ENCODE measurements at regions of chr17 and their contacts with region 1.

Region 1: GRCh38 chr17:794876-795275 is 12.7 kb downstream of the MRM3 start:
- DNase-seq: peak; percentile 84 to 92 (median 89)
- H3K4me3 ChIP-seq: peak overlapping the region in 51 of 59 donors; percentile 1 to 54 (median 28)
- H3K27ac ChIP-seq: peak overlapping the region in 55 of 59 donors; percentile 0 to 91 (median 72)
- H3K27me3 ChIP-seq: no peaks in the 10 kb centered on the region
- CTCF ChIP-seq: peak; percentile 76 to 97 (median 92)

Region 2: DNA sequence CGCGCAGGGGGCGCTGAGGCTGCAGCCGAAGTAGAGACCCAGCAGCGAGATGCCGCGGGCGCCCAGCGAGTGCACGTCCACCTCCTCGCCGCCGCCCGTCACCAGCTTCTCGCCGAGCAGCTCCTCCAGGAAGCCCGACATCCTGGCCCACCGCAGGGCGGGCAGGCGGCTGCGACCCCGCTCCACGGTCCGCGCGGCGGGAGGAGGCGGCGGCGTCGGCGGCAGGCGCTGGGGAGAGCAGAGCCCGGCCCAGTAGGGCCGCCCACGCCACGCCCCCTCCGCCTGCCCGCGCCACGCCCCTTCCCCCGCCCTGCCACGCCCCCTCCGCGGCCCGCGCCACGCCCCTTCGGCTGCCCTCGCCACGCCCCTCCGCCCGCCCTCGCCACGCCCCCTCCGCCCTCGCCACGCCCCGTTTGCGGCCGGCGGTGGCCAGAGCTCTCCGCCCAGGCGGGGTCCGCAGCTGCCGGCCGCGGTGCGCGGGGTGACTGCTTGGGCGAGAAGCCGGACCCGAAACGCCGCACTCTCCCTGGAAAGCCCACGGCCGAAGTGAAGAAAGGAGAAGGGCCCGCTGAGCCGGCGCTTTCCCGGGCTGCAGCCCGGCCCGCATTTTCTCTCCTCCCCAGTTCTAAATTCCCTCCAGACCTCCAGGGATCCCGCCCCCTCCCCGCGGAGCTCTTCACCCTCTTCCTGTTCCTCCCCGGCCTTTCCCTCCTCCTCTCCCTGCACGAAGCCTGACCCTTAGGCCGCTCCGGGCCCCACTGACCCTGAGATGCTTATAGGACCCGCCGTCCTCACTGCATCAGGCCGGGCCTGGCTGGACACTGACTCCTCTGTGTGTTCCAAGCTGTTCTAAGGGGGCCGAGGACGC is 184.9 kb after region 1 on chr17 and contains the start of gene NXN:
- intact Hi-C with region 1: loop called (anchors 1 kb)
- DNase-seq: peak; percentile 60 to 91 (median 82)
- H3K4me3 ChIP-seq: peak within 1 kb of the TSS; percentile 46 to 77 (median 66)
- H3K27ac ChIP-seq: peak within 1 kb of the TSS in 54 of 59 donors; percentile 32 to 87 (median 73)
- H3K27me3 ChIP-seq: peaks cover 0 to 8% (median 0%) of the 10 kb centered on the region in 45 donors
- CTCF ChIP-seq: peak in 17 of 56 donors; percentile 5 to 34 (median 17)
- total RNA-seq, gene NXN: 6.9 to 38.1 (median 15.4) TPM

Region 3: GRCh38 chr17:1055751-1056645 is 261.1 kb after region 1 on chr17:
- intact Hi-C with region 1: loop called in 1 of 2 experiments (anchors 5 kb)
- DNase-seq: peak in 9 of 10 donors; percentile 61 to 81 (median 75)
- H3K4me3 ChIP-seq: no peak overlapping the region
- H3K27ac ChIP-seq: peak overlapping the region in 28 of 59 donors; percentile 1 to 69 (median 46)
- H3K27me3 ChIP-seq: peaks cover 0 to 4% (median 0%) of the 10 kb centered on the region in 45 donors
- CTCF ChIP-seq: peak; percentile 56 to 92 (median 85)

Region 4: DNA sequence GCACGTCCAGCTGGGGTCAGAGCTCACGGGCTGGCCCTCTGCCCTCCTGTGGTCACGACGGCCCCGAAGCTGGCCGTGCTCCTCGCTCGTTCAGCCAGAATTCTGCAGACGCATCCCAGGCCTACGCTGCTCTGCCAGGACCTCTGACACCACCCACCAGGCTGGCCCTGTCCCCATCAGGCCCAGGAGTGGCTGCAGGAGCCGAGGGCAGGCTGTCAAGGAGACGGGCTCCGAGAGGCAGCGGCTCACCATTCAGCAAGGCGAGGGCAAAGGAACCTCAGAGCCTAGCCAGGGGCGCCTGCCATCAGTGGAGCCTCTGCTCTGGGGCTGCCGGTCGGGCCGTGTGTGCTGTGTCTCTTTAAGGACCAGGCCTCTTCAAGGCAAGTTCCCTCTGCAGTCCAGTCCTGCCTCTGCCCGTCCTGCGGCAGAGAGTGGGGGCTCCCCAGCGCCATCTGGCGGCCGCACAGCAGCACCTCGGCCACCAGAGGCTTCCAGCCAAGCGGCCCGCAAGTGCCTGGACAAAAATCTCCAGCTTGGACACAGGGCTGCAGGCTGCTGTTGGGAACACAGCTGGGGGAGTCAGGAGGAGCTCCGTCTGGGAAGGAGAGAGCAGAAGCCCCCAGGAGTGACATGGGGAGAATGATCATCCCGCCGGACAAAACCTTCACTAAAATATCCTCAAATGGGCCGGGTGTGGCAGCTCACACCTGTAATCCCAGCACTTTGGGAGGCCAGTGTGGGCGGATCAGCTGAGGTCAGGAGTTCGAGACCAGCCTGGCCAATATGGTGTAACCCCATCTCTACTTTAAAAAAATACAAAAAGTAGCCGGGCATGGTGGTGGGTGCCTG is 392.3 kb after region 1 on chr17:
- intact Hi-C with region 1: loop called in 1 of 2 experiments (anchors 5 kb)
- DNase-seq: peak; percentile 62 to 91 (median 76)
- H3K4me3 ChIP-seq: peak overlapping the region in 56 of 59 donors; percentile 4 to 61 (median 40)
- H3K27ac ChIP-seq: peak overlapping the region in 56 of 59 donors; percentile 7 to 88 (median 70)
- H3K27me3 ChIP-seq: peaks cover 0 to 23% (median 0%) of the 10 kb centered on the region in 45 donors
- CTCF ChIP-seq: peak; percentile 82 to 99 (median 95)

Measured in dorsolateral prefrontal cortex (tissue), 120 donors.